PC-9 (cell line): ENCODE measurements at regions of chr6 and their contacts with region 1.

Region 1: DNA sequence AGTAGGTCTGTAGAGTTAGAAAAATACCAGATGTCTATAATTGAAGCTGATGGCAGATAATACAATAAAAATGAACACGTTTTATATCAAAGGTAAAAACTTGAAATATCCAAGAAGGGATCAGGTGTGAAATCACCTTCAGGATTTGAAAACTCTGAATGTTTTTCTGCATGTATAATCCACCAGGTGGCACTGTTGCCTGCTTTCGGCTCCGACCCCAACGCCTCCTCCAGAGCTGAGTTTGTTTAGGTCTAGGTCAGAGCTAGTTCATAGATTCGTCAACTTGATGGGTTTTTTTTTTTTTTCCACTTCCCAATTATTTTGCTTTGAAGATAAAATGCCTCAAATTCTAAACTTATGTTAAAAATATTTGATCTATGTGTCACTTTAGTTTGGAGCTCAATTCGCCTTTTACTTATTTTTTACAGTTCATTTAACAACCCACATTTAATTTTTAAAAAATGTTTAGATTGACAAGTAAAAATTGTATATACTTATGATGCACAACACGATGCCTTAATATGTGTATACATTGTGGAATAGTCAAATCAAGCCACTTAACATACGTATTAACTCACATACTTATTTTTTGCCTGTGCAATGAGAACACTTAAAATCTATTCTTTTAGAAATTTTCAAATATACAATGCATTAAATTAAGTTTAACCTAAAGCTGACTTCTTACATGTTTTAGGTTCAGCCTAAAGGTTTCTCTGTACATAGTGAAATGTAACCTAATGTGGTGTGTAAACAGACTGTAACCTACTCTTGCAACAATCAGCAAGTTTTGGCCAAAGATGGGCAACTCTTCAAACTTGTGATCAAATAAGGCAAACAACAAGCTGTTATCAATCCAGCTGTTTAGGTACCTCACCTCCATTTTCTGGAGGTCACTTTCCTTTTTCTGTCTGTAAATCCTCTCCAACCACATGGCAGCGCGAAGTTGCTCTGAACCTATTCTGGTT is 39.4 kb upstream of the ENPP4 start:
- DNase-seq: peak; percentile 44 to 47
- H3K4me3 ChIP-seq: no peak overlapping the region
- H3K27ac ChIP-seq: no peak overlapping the region
- H3K4me1 ChIP-seq: no peaks in the 10 kb centered on the region
- H3K27me3 ChIP-seq: no peaks in the 10 kb centered on the region; the same call in 1 of the 2 replicates
- CTCF ChIP-seq: peak; percentile 85

Region 2: DNA sequence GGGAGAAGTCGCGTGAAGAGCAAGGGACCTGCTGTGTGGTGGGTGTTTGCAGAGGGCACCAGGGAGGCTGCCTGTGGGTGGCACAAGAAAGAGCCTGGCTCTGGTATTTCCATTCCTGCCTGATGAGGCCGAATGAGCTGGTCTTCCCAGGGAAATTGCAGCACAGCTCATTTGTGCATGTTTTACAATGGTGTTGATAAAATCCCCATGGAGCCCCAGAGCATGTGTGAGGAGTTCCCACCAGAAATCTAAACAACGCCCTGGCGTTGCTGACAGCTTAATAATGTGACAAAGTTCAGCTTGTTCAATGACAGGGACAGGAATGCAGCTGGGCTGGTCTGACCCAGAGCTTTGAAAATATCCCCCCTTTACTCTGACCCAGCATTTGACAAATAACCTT is 210.2 kb before region 1 on chr6:
- CTCF ChIA-PET with region 1: no interaction called
- POLR2A ChIA-PET with region 1: no interaction called
- intact Hi-C with region 1: no loop called
- DNase-seq: peak; percentile 51 to 82
- H3K4me3 ChIP-seq: no peak overlapping the region
- H3K27ac ChIP-seq: no peak overlapping the region; the same call in 1 of the 2 replicates
- H3K4me1 ChIP-seq: peaks cover 16% of the 10 kb centered on the region
- H3K27me3 ChIP-seq: no peaks in the 10 kb centered on the region
- CTCF ChIP-seq: no peak

Region 3: GRCh38 chr6:45991189-45991588 is 99.2 kb before region 1 on chr6:
- CTCF ChIA-PET with region 1: interaction called, 14 read pairs
- POLR2A ChIA-PET with region 1: interaction called, 4 read pairs
- intact Hi-C with region 1: no loop called
- DNase-seq: no peak
- H3K4me3 ChIP-seq: no peak overlapping the region
- H3K27ac ChIP-seq: no peak overlapping the region
- H3K4me1 ChIP-seq: no peaks in the 10 kb centered on the region
- H3K27me3 ChIP-seq: no peaks in the 10 kb centered on the region
- CTCF ChIP-seq: no peak; the same call in 1 of the 2 replicates

Region 4: GRCh38 chr6:46042355-46042999 is 47.9 kb before region 1 on chr6:
- CTCF ChIA-PET with region 1: no interaction called
- POLR2A ChIA-PET with region 1: no interaction called
- intact Hi-C with region 1: loop called (anchors 1 kb)
- DNase-seq: peak in 1 of 2 experiments; percentile 18
- H3K4me3 ChIP-seq: no peak overlapping the region
- H3K27ac ChIP-seq: no peak overlapping the region
- H3K4me1 ChIP-seq: peaks cover 5% of the 10 kb centered on the region; the same call in 1 of the 2 replicates
- H3K27me3 ChIP-seq: no peaks in the 10 kb centered on the region
- CTCF ChIP-seq: peak; percentile 68

Region 5: GRCh38 chr6:46221222-46221793 is 130.9 kb after region 1 on chr6:
- CTCF ChIA-PET with region 1: interaction called, 8 read pairs
- POLR2A ChIA-PET with region 1: no interaction called
- intact Hi-C with region 1: loop called (anchors 2 kb)
- DNase-seq: no peak
- H3K4me3 ChIP-seq: no peak overlapping the region
- H3K27ac ChIP-seq: no peak overlapping the region
- H3K4me1 ChIP-seq: no peaks in the 10 kb centered on the region
- H3K27me3 ChIP-seq: peaks cover 4% of the 10 kb centered on the region; the same call in 1 of the 2 replicates
- CTCF ChIP-seq: peak; percentile 77

Region 6: GRCh38 chr6:46410334-46410953 is 320.0 kb after region 1 on chr6:
- CTCF ChIA-PET with region 1: interaction called, 11 read pairs
- POLR2A ChIA-PET with region 1: no interaction called
- intact Hi-C with region 1: loop called (anchors 1 kb)
- DNase-seq: peak in 1 of 2 experiments; percentile 23
- H3K4me3 ChIP-seq: no peak overlapping the region
- H3K27ac ChIP-seq: no peak overlapping the region
- H3K4me1 ChIP-seq: no peaks in the 10 kb centered on the region
- H3K27me3 ChIP-seq: no peaks in the 10 kb centered on the region
- CTCF ChIP-seq: peak; percentile 91

Region 7: DNA sequence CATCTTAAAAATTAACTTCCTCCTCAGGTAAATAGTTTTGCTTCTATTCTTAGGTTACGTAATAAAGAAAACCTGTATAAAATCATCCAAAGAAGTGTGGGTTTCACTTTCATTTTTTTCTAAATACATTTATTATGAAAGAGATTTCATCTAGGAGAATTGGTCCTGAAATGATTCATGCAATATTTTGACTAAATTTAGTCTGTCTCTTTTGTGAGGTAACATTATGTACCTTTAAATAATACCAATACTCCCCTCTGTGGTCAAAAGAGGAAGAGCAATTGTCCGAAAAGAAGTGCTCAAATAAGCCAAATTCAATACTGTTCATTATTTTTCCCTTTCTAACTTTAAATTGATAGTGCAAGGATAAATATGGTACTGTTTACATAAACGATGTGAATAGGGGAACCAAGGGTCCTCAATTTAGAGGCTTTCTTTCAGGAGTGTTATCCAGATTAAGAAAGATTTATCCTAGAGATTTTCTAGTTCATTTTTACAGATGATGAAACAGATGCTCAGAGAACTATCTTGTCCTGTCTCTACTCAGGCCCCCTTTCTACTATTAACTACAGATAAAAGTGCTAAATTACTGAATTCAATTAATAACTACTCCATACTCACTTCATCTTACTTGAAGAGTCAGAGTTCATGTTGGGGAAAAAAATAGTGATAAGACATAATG is 536.0 kb after region 1 on chr6:
- CTCF ChIA-PET with region 1: no interaction called
- POLR2A ChIA-PET with region 1: no interaction called
- intact Hi-C with region 1: loop called (anchors 1 kb)
- DNase-seq: peak in 1 of 2 experiments; percentile 61
- H3K4me3 ChIP-seq: no peak overlapping the region
- H3K27ac ChIP-seq: no peak overlapping the region
- H3K4me1 ChIP-seq: peaks cover 7% of the 10 kb centered on the region; the same call in 1 of the 2 replicates
- H3K27me3 ChIP-seq: no peaks in the 10 kb centered on the region
- CTCF ChIP-seq: peak; percentile 77